ENCODE measurements at regions of chr2 and their contacts with region 1.

Region 1: GRCh38 chr2:101151141-101151858 is at the start of gene TBC1D8:
- H3K4me3 ChIP-seq: peak within 1 kb of the TSS; percentile 71
- H3K27ac ChIP-seq: peak within 1 kb of the TSS; percentile 67; the same call in 1 of the 2 replicates
- H3K4me1 ChIP-seq: no peaks in the 10 kb centered on the region
- CTCF ChIP-seq: no peak

Region 2: GRCh38 chr2:100610381-100610831 is 540.9 kb before region 1 on chr2:
- CTCF ChIA-PET with region 1: interaction called, 11 read pairs
- POLR2A ChIA-PET with region 1: no interaction called
- H3K4me3 ChIP-seq: no peak overlapping the region
- H3K27ac ChIP-seq: no peak overlapping the region
- H3K4me1 ChIP-seq: no peaks in the 10 kb centered on the region
- CTCF ChIP-seq: peak; percentile 76

Region 3: DNA sequence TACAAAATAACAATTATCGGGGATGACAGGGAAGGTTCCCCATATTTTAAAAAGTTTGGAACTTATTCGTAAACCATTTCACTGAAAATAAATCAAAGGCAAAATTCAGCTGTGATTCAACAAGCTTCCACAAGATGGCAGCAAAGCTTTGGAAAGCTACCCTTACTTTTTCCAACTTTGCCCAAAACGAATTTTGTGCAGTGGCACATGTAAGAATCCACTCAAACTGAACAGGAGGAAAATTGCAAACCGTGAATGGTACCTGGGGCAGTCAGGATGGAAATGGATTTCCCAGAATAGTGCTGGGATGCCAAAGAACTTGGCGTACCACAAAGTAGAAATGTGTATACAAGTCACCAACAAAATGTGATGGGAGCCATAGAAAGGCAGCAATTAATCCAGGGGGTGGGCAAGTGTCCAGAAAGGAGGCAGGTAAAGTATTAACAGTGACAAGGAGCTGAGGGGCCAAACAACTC is 138.6 kb before region 1 on chr2:
- CTCF ChIA-PET with region 1: interaction called, 22 read pairs
- POLR2A ChIA-PET with region 1: interaction called, 4 read pairs
- H3K4me3 ChIP-seq: no peak overlapping the region
- H3K27ac ChIP-seq: no peak overlapping the region
- H3K4me1 ChIP-seq: no peaks in the 10 kb centered on the region
- CTCF ChIP-seq: peak; percentile 65

Region 4: DNA sequence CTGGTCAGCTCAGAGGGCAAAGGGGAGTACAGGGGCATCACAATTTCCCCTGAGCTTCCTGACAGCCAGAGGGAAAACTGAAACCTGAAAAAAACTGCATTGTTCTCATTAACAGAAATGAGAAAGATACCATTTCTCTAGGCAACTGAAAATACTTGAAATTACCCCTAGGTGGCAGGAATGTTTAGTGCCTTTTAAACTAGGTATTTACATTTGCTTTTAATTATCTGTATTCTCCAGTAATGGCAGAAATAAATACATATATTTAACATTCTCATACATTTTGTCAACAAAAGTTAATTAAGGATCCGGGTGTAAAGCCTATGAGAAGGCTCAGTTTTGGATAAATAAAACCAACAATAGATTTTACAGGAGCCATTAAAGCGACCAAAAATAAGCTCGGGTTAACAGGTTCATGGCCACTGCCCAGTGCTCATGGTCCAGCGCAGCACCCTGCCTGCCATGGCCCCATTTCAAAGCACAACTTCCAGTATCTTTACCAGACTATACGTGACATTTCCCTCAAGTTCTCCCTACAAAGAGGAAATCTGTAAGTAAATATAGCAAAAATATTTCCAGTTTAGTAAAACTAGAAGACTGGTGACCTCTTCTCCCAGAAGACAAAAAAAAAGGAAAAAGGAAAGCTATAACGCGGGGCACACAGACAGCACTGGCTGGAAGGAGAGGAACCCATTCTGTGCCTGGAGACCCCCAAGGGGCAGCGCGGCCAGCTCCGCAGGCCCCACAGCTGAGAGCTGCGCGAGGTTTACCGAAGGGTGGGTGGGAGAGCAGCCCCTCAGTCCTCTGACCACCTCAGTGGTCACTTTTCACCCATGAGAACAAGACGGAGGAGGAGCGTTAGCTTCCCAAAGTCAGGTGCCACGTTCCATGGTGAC is 114.5 kb before region 1 on chr2:
- CTCF ChIA-PET with region 1: interaction called, 48 read pairs
- POLR2A ChIA-PET with region 1: interaction called, 4 read pairs
- H3K4me3 ChIP-seq: no peak overlapping the region
- H3K27ac ChIP-seq: no peak overlapping the region
- H3K4me1 ChIP-seq: no peaks in the 10 kb centered on the region
- CTCF ChIP-seq: no peak

Region 5: GRCh38 chr2:101120172-101120996 is 30.9 kb before region 1 on chr2:
- CTCF ChIA-PET with region 1: interaction called, 5 read pairs
- POLR2A ChIA-PET with region 1: interaction called, 12 read pairs
- H3K4me3 ChIP-seq: no peak overlapping the region
- H3K27ac ChIP-seq: no peak overlapping the region
- H3K4me1 ChIP-seq: peaks cover 16% of the 10 kb centered on the region
- CTCF ChIP-seq: no peak

Region 6: DNA sequence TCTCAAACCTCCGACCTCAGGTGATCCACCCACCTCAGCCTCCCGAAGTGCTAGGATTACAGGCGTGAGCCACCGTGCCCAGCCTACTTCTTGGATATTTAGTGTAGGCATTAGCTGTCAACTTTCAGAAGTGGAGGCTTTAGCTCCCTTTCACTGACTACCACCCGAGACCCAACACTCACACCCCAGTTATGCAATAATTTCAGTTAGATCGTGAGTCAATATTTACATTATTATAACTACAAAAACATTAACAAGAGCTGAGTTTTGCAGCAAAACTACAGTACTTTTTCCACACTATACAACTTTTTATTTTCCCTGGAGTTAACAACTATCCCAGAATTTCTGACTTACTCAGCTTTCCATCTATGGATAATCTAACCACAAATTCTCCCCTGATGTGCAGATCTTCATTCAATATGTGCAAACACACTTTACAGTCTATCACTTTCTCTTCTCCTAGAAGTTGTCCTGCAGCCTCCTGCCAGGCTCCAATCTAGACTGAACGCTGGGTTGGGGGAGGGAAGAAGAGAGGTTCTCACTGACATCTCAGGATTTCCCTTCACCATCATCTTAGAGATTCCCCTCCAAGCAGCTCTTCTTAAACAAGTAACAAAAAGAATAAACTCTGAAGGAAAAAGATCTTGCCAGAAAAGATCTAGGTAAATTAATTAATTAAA is 10.2 kb before region 1 on chr2:
- CTCF ChIA-PET with region 1: interaction called, 5 read pairs
- POLR2A ChIA-PET with region 1: interaction called, 10 read pairs
- H3K4me3 ChIP-seq: no peak overlapping the region
- H3K27ac ChIP-seq: no peak overlapping the region
- H3K4me1 ChIP-seq: peaks cover 11% of the 10 kb centered on the region
- CTCF ChIP-seq: no peak

Region 7: GRCh38 chr2:101205521-101205998 is 54.3 kb after region 1 on chr2:
- CTCF ChIA-PET with region 1: interaction called, 12 read pairs
- POLR2A ChIA-PET with region 1: no interaction called
- H3K4me3 ChIP-seq: no peak overlapping the region; the same call in 1 of the 2 replicates
- H3K27ac ChIP-seq: no peak overlapping the region
- H3K4me1 ChIP-seq: no peaks in the 10 kb centered on the region
- CTCF ChIP-seq: peak; percentile 30; the same call in 1 of the 2 replicates

Measured in HEK293 (cell line).